ENCODE measurements at regions of chr7 and their contacts with region 1.

Region 1: GRCh38 chr7:52925332-52925731 is 110.1 kb upstream of the POM121L12 start:
- DNase-seq: no peak
- ATAC-seq: no peak
- H3K4me3 ChIP-seq: no peak overlapping the region
- H3K4me3 Mint-ChIP-seq: no peak overlapping the region
- H3K27ac ChIP-seq: no peak overlapping the region
- H3K27ac Mint-ChIP-seq: no peak overlapping the region
- H3K4me1 ChIP-seq: no peaks in the 10 kb centered on the region
- H3K4me1 Mint-ChIP-seq: no peaks in the 10 kb centered on the region
- H3K27me3 ChIP-seq: no peaks in the 10 kb centered on the region
- H3K27me3 Mint-ChIP-seq: no peaks in the 10 kb centered on the region
- CTCF ChIP-seq: no peak

Region 2: GRCh38 chr7:52811537-52811936 is 113.8 kb before region 1 on chr7:
- CTCF ChIA-PET with region 1: no interaction called
- POLR2A ChIA-PET with region 1: no interaction called
- intact Hi-C with region 1: no loop called
- DNase-seq: no peak
- ATAC-seq: no peak
- H3K4me3 ChIP-seq: no peak overlapping the region
- H3K4me3 Mint-ChIP-seq: no peak overlapping the region
- H3K27ac ChIP-seq: no peak overlapping the region
- H3K27ac Mint-ChIP-seq: no peak overlapping the region
- H3K4me1 ChIP-seq: no peaks in the 10 kb centered on the region
- H3K4me1 Mint-ChIP-seq: no peaks in the 10 kb centered on the region
- H3K27me3 ChIP-seq: no peaks in the 10 kb centered on the region
- H3K27me3 Mint-ChIP-seq: no peaks in the 10 kb centered on the region
- CTCF ChIP-seq: no peak

Region 3: GRCh38 chr7:52863652-52864051 is 61.7 kb before region 1 on chr7:
- CTCF ChIA-PET with region 1: no interaction called
- POLR2A ChIA-PET with region 1: no interaction called
- intact Hi-C with region 1: loop called in 1 of 2 experiments (anchors 10 kb)
- DNase-seq: no peak
- ATAC-seq: no peak
- H3K4me3 ChIP-seq: no peak overlapping the region
- H3K4me3 Mint-ChIP-seq: no peak overlapping the region
- H3K27ac ChIP-seq: no peak overlapping the region
- H3K27ac Mint-ChIP-seq: no peak overlapping the region
- H3K4me1 ChIP-seq: no peaks in the 10 kb centered on the region
- H3K4me1 Mint-ChIP-seq: no peaks in the 10 kb centered on the region
- H3K27me3 ChIP-seq: no peaks in the 10 kb centered on the region
- H3K27me3 Mint-ChIP-seq: no peaks in the 10 kb centered on the region
- CTCF ChIP-seq: no peak